GM12878 (cell line): ENCODE measurements at regions of chr7 and their contacts with region 1.

Region 1: DNA sequence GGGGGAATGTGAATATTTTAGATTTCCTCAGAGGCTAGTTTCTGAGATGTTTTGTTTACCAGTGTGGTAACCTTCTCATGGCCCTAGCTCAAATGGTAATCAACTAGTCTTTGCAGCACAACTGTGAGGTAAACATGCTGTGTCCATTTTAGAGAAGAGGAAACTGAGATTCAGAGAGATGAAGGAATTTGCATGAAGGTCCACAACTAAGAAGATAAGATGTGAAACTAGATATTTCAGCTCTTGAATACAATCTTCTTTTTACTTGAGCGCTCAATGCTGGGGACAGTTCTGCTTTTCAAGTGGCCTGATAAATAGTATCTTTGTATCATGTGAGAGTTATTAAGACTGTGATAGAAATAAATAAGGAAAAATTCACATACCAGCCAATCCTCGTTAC is 245.4 kb downstream of the AUTS2 start:
- DNase-seq: peak; percentile 74
- ATAC-seq: peak; percentile 71
- H3K4me3 ChIP-seq: peak overlapping the region; percentile 25; the same call in 1 of the 2 replicates
- H3K27ac ChIP-seq: peak overlapping the region; percentile 71
- H3K4me1 ChIP-seq: peaks cover 67% of the 10 kb centered on the region
- H3K27me3 ChIP-seq: no peaks in the 10 kb centered on the region
- CTCF ChIP-seq: no peak
- EP300 ChIP-seq: no peak; a peak in 1 of 4 replicates
- POLR2A ChIP-seq: no peak
- RAD21 ChIP-seq: no peak

Region 2: DNA sequence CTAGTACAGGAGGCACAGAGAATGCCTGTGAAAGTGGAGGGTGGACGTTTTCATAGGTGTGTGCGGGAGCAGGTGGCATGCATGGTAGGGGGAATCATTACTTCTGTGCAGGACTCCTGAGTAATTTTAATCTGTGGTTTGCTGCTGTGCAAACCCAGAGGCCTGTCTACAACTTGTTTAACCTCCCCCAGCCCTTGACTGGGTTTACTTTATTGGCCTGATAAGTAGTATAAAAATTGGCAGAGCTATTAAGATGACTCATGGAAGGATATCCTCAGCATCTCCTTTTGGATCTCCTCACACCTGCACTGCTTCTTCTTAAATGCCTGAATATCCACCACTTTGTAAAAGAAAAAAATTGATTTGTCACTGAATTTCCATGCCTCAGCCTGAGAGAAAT is 140.6 kb before region 1 on chr7:
- CTCF ChIA-PET with region 1: no interaction called
- POLR2A ChIA-PET with region 1: no interaction called
- RAD21 ChIA-PET with region 1: no interaction called
- SMC1A ChIA-PET with region 1: no interaction called
- in situ Hi-C with region 1: no loop called
- intact Hi-C with region 1: no loop called
- DNase-seq: no peak
- ATAC-seq: peak; percentile 40
- H3K4me3 ChIP-seq: no peak overlapping the region
- H3K27ac ChIP-seq: no peak overlapping the region
- H3K4me1 ChIP-seq: peaks cover 17% of the 10 kb centered on the region
- H3K27me3 ChIP-seq: no peaks in the 10 kb centered on the region
- CTCF ChIP-seq: no peak
- EP300 ChIP-seq: no peak
- POLR2A ChIP-seq: no peak
- RAD21 ChIP-seq: no peak

Region 3: DNA sequence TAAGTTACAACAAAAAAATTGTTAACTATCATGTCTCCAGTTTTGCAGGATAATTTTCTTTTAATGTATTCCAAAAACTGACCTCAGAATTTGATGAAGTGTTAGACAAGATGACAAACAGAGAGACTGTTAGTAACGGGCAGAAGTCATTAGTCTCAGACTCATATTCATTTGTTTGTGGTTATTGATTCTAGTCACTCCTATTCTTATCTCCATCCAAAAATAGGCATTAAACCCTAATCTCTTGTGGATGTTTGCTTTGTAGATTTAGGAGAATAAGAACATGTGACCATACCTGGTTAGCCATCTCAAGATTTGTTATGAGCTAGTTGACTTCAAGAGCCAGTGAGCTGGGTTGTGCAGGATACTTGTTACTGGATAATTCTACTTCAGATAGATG is 15.7 kb after region 1 on chr7:
- CTCF ChIA-PET with region 1: interaction called, 8 read pairs
- POLR2A ChIA-PET with region 1: interaction called, 7 read pairs
- RAD21 ChIA-PET with region 1: interaction called, 3 read pairs
- SMC1A ChIA-PET with region 1: interaction called, 8 read pairs
- in situ Hi-C with region 1: no loop called
- intact Hi-C with region 1: loop called (anchors 1 kb)
- DNase-seq: no peak
- ATAC-seq: peak; percentile 64
- H3K4me3 ChIP-seq: 0 out of 2 replicates have a peak overlapping the region, but pooled peaks have one; percentile 15
- H3K27ac ChIP-seq: no peak overlapping the region
- H3K4me1 ChIP-seq: peaks cover 14% of the 10 kb centered on the region; the same call in 1 of the 2 replicates
- H3K27me3 ChIP-seq: no peaks in the 10 kb centered on the region
- CTCF ChIP-seq: no peak
- EP300 ChIP-seq: no peak
- POLR2A ChIP-seq: no peak
- RAD21 ChIP-seq: no peak

Region 4: DNA sequence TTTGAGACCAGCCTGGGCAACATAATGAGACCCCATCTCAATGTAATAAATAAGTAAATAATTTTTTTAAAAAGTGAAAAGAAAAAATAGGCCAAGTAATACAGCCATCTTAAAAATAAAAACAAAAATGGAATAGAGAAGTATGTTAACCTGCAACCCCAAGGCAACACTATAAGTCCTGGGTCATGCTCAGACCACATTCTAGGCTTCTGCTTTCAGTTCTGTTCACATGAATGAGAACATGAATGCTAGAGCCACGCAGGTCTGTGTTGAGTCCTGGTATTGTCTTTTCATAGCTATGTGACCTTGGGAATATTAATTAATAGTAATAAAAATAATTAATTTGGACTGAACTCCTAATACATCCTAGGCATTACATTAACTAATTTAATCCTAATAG is 38.6 kb after region 1 on chr7:
- CTCF ChIA-PET with region 1: interaction called, 4 read pairs
- POLR2A ChIA-PET with region 1: interaction called, 3 read pairs
- RAD21 ChIA-PET with region 1: interaction called, 6 read pairs
- SMC1A ChIA-PET with region 1: interaction called, 7 read pairs
- in situ Hi-C with region 1: no loop called
- intact Hi-C with region 1: loop called (anchors 2 kb)
- DNase-seq: no peak
- ATAC-seq: peak; percentile 84
- H3K4me3 ChIP-seq: no peak overlapping the region
- H3K27ac ChIP-seq: peak overlapping the region; percentile 11; the same call in 1 of the 2 replicates
- H3K4me1 ChIP-seq: peaks cover 22% of the 10 kb centered on the region
- H3K27me3 ChIP-seq: no peaks in the 10 kb centered on the region
- CTCF ChIP-seq: no peak
- EP300 ChIP-seq: no peak
- POLR2A ChIP-seq: no peak
- RAD21 ChIP-seq: no peak